ENCODE measurements at regions of chr2 and their contacts with region 1.

Region 1: GRCh38 chr2:61426267-61426897 is 44.5 kb downstream of the USP34 start:
- DNase-seq: peak; percentile 87
- ATAC-seq: peak; percentile 86
- H3K4me3 ChIP-seq: no peak overlapping the region
- H3K4me3 Mint-ChIP-seq: peak overlapping the region; percentile 60
- H3K27ac ChIP-seq: peak overlapping the region; percentile 83 to 90
- H3K27ac Mint-ChIP-seq: peak overlapping the region; percentile 91
- H3K4me1 ChIP-seq: peaks cover 45 to 50% of the 10 kb centered on the region in 2 donors
- H3K4me1 Mint-ChIP-seq: peaks cover 73% of the 10 kb centered on the region
- H3K27me3 ChIP-seq: no peaks in the 10 kb centered on the region
- H3K27me3 Mint-ChIP-seq: no peaks in the 10 kb centered on the region
- CTCF ChIP-seq: peak; percentile 89

Region 2: DNA sequence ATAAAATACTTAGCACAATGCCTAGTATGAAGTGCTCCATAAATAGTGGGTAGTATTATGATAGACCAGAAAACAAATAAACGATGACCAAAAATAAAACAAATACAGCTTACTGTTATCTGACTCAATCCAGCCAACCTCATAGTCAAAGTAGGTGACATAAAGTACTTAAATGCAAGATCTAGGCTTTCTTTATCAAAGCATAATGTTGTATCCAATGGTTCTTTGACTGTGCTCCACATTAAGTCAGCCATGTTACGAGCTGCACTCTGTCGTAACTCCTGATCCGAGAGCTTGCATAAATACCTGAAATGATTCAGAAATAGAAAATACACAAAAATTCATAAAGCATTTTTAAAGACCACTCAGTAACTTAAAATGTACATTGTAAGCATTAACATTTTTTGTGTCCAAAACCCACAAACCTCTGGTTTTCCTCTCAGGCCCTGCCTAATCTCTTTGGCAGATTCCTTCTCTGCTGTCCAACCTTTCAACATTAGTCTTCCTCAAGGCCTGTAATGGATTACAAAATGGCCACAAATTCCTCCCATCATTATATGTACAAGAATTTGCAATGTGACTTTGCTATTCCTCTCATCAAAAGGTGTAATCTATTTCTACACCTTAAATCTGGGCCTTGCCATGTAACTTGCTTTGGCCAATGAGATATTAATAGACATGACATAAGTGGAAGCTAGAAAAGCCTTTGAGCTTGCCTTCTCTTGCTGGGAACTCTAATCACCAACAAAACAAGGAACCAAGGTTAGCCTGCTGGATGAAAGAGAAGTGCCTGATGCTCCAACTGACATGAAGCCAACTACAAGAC is 46.1 kb before region 1 on chr2:
- CTCF ChIA-PET with region 1: no interaction called
- POLR2A ChIA-PET with region 1: no interaction called
- intact Hi-C with region 1: no loop called
- DNase-seq: no peak
- ATAC-seq: no peak
- H3K4me3 ChIP-seq: no peak overlapping the region
- H3K4me3 Mint-ChIP-seq: no peak overlapping the region
- H3K27ac ChIP-seq: no peak overlapping the region
- H3K27ac Mint-ChIP-seq: no peak overlapping the region
- H3K4me1 ChIP-seq: no peaks in the 10 kb centered on the region
- H3K4me1 Mint-ChIP-seq: no peaks in the 10 kb centered on the region
- H3K27me3 ChIP-seq: no peaks in the 10 kb centered on the region
- H3K27me3 Mint-ChIP-seq: no peaks in the 10 kb centered on the region
- CTCF ChIP-seq: no peak

Region 3: GRCh38 chr2:61463769-61464475 is 37.5 kb after region 1 on chr2:
- CTCF ChIA-PET with region 1: interaction called, 30 read pairs
- POLR2A ChIA-PET with region 1: interaction called, 3 read pairs
- intact Hi-C with region 1: loop called (anchors 1 kb)
- DNase-seq: peak; percentile 42
- ATAC-seq: peak; percentile 50
- H3K4me3 ChIP-seq: peak overlapping the region in 1 of 5 experiments; percentile 35
- H3K4me3 Mint-ChIP-seq: peak overlapping the region; percentile 79
- H3K27ac ChIP-seq: peak overlapping the region; percentile 72 to 73
- H3K27ac Mint-ChIP-seq: peak overlapping the region; percentile 87
- H3K4me1 ChIP-seq: peaks cover 25 to 39% of the 10 kb centered on the region in 2 donors
- H3K4me1 Mint-ChIP-seq: peaks cover 62% of the 10 kb centered on the region
- H3K27me3 ChIP-seq: no peaks in the 10 kb centered on the region
- H3K27me3 Mint-ChIP-seq: no peaks in the 10 kb centered on the region
- CTCF ChIP-seq: no peak

Region 4: DNA sequence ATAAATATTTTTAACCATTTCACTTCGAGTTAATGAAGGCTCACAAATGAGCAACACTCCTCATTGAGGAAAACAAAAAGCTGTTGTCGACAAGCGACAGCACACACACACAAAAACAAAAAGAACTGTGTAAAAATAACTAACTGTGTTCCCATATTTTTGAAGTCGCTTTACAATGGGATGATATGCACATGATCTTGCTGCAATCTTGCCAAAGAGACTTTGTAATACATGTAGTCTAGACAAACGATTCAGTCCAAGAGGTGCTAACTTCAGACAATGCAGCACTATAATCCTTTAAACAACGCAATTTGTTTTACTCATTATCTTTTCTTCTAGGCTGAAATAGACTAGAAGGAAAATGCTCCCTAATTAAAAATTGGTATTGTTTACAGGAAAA is 51.7 kb after region 1 on chr2:
- CTCF ChIA-PET with region 1: interaction called, 39 read pairs
- POLR2A ChIA-PET with region 1: interaction called, 5 read pairs
- intact Hi-C with region 1: no loop called
- DNase-seq: no peak
- ATAC-seq: no peak
- H3K4me3 ChIP-seq: no peak overlapping the region
- H3K4me3 Mint-ChIP-seq: no peak overlapping the region
- H3K27ac ChIP-seq: no peak overlapping the region
- H3K27ac Mint-ChIP-seq: no peak overlapping the region
- H3K4me1 ChIP-seq: no peaks in the 10 kb centered on the region
- H3K4me1 Mint-ChIP-seq: no peaks in the 10 kb centered on the region
- H3K27me3 ChIP-seq: no peaks in the 10 kb centered on the region
- H3K27me3 Mint-ChIP-seq: no peaks in the 10 kb centered on the region
- CTCF ChIP-seq: no peak

Region 5: GRCh38 chr2:61493523-61493942 is 67.2 kb after region 1 on chr2:
- CTCF ChIA-PET with region 1: interaction called, 14 read pairs
- POLR2A ChIA-PET with region 1: no interaction called
- intact Hi-C with region 1: no loop called
- DNase-seq: peak; percentile 18
- ATAC-seq: no peak
- H3K4me3 ChIP-seq: no peak overlapping the region
- H3K4me3 Mint-ChIP-seq: no peak overlapping the region
- H3K27ac ChIP-seq: peak overlapping the region in 1 of 2 donors; percentile 74
- H3K27ac Mint-ChIP-seq: peak overlapping the region; percentile 43
- H3K4me1 ChIP-seq: peaks cover 5 to 11% of the 10 kb centered on the region in 2 donors
- H3K4me1 Mint-ChIP-seq: peaks cover 14% of the 10 kb centered on the region
- H3K27me3 ChIP-seq: no peaks in the 10 kb centered on the region
- H3K27me3 Mint-ChIP-seq: no peaks in the 10 kb centered on the region
- CTCF ChIP-seq: no peak

Region 6: GRCh38 chr2:61854474-61855182 is 428.2 kb after region 1 on chr2:
- CTCF ChIA-PET with region 1: no interaction called
- POLR2A ChIA-PET with region 1: no interaction called
- intact Hi-C with region 1: loop called (anchors 5 kb)
- DNase-seq: peak; percentile 96
- ATAC-seq: peak; percentile 83
- H3K4me3 ChIP-seq: peak overlapping the region; percentile 92 to 99 (median 98)
- H3K4me3 Mint-ChIP-seq: peak overlapping the region; percentile 94
- H3K27ac ChIP-seq: peak overlapping the region; percentile 56 to 68
- H3K27ac Mint-ChIP-seq: peak overlapping the region; percentile 92
- H3K4me1 ChIP-seq: peaks cover 11 to 16% of the 10 kb centered on the region in 2 donors
- H3K4me1 Mint-ChIP-seq: peaks cover 23% of the 10 kb centered on the region
- H3K27me3 ChIP-seq: no peaks in the 10 kb centered on the region
- H3K27me3 Mint-ChIP-seq: no peaks in the 10 kb centered on the region
- CTCF ChIP-seq: no peak

Measured in B cell (primary cell).